ENCODE measurements at regions of chr7 and their contacts with region 1.

Region 1: DNA sequence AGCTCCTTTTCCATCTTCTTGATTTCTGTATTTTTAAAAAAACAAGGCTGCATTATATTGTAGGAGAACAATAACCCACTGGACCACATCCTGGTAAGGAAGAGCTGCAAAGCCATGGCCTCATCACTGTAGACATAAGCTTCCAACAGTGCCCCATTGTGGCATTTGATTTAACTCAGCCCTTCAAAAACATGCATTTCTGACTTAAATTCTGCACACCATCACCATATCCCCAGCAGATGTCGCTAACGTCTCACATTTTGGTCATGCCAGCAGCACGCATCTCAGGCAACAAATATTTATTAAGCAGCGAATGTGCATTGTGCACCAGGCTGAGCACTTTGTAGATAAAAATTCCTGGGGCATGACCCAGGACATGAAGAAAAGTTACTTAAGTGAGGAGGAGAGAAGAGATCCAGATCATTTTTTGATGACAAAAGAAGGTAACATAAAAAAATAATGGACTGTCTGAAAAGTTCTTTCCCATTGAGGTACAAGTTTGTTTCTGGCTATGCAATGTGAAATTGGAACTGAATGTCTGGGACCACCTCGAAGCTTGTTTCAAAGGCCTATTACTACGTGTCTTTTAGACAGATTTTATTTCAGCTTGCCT is 164.6 kb upstream of the CDCA7L start:
- DNase-seq: peak; percentile 38
- H3K4me3 ChIP-seq: no peak overlapping the region
- H3K27me3 ChIP-seq: no peaks in the 10 kb centered on the region
- CTCF ChIP-seq: peak; percentile 75

Region 2: DNA sequence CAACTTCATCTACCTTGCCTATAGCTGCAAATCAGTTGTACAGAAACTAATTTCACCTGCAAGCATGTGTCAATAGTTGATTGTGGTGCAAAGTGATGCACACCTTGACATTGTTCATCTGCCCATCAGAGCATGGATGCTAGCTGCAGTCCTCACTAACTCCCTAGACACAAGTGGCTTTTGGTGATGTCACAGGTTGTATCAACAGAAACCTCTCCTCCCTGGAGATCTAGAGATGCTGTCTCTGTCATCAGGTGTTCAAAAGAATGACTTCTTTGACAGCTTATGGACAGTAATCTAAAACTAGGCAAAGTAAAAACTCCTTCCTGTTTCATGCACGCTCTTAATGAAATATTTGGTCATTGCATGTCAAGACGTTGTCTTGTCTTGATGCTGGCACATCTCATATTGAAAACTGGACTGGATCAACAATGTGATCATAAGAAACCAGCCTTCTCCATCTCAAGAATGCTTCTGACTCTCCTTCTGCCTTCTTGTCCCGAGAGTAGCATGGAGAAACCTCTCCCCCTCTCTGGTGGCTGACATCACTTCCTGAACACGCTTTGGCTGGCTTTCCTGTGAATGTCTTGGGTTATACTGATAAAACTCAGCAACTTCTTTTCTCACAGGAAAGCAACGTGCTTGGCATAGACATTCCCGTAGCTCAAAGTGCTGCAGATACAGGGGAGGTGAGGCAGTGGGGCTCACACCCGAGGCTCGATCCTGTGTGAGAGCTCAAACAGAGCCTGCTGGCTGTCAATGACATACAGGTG is 11.6 kb after region 1 on chr7:
- CTCF ChIA-PET with region 1: interaction called, 16 read pairs
- POLR2A ChIA-PET with region 1: no interaction called
- DNase-seq: no peak
- H3K4me3 ChIP-seq: no peak overlapping the region
- H3K27me3 ChIP-seq: no peaks in the 10 kb centered on the region; the same call in 1 of the 2 replicates
- CTCF ChIP-seq: no peak

Region 3: GRCh38 chr7:22127835-22128527 is 17.6 kb after region 1 on chr7:
- CTCF ChIA-PET with region 1: interaction called, 16 read pairs
- POLR2A ChIA-PET with region 1: no interaction called
- DNase-seq: no peak
- H3K4me3 ChIP-seq: no peak overlapping the region
- H3K27me3 ChIP-seq: no peaks in the 10 kb centered on the region; the same call in 1 of the 2 replicates
- CTCF ChIP-seq: no peak

Region 4: DNA sequence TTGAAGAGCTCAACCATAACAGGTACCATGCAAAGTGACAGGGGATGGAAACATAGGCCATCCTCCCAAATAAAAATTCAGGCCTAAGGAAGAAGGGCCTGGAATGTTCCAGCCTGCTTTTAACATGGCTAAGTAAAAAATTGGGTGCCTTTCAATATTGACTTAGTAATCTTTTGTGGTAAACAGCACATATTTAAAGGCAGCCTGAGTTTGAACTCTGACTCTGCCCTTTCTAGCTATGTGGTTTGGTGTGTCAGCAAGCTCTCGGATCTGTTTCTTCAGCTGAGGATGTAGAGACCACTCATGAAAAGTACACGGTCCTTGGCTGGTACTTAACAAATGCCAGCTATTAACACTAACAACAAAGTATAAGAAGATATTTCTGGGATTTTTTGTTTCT is 27.1 kb after region 1 on chr7:
- CTCF ChIA-PET with region 1: interaction called, 16 read pairs
- POLR2A ChIA-PET with region 1: no interaction called
- DNase-seq: peak; percentile 28
- H3K4me3 ChIP-seq: no peak overlapping the region
- H3K27me3 ChIP-seq: no peaks in the 10 kb centered on the region
- CTCF ChIP-seq: no peak

Region 5: GRCh38 chr7:22481726-22482125 is 371.4 kb after region 1 on chr7:
- CTCF ChIA-PET with region 1: interaction called, 89 read pairs
- POLR2A ChIA-PET with region 1: no interaction called
- DNase-seq: no peak
- H3K4me3 ChIP-seq: no peak overlapping the region
- H3K27me3 ChIP-seq: no peaks in the 10 kb centered on the region
- CTCF ChIP-seq: no peak

Region 6: DNA sequence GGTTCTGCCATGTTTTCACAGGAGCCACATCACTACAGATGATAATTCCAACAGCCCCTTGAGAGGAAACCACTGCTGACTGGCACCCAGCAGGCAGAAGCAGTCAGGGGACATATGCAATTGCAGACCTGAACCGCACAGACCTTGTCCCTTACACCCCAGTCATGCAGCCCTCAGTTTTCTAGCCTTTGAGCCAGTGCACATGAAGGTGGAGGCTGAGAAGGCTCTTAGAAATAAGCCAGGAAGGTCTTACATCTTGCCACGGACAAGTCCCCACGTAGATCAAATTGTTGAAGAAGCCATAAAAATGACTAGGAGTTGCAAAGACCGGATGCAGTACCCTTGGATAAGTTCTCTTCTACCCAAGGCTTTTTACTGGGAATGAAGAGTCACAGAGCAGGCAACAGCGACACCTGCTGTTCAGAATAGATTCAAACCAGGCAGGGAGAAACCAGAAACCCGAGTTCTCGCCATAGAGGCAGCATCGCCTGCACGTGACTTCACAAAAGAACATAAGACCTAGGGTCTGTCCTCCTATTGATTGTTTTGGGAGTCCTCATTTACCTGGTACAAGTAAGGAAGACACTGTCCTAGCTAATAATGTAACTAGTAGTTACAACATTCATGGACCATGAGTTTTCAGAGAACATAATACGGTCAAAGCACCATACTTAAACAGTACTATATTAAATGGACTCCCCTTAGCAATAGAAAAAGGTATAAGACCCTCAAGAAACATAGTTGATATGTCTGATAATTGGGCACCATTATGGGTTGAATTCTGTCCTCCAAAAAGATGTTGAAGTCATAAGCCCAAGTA is 378.5 kb after region 1 on chr7:
- CTCF ChIA-PET with region 1: interaction called, 89 read pairs
- POLR2A ChIA-PET with region 1: no interaction called
- DNase-seq: no peak
- H3K4me3 ChIP-seq: no peak overlapping the region
- H3K27me3 ChIP-seq: no peaks in the 10 kb centered on the region
- CTCF ChIP-seq: peak; percentile 86

Region 7: GRCh38 chr7:22499044-22499443 is 388.7 kb after region 1 on chr7:
- CTCF ChIA-PET with region 1: interaction called, 18 read pairs
- POLR2A ChIA-PET with region 1: no interaction called
- DNase-seq: no peak
- H3K4me3 ChIP-seq: no peak overlapping the region
- H3K27me3 ChIP-seq: no peaks in the 10 kb centered on the region
- CTCF ChIP-seq: no peak

Measured in BJ (cell line).